CD14-positive monocyte (primary cell): ENCODE measurements at regions of chr6 and their contacts with region 1.

Region 1: GRCh38 chr6:166275714-166276166 is 32.5 kb downstream of the PRR18 start:
- DNase-seq: peak; percentile 55 to 69 (median 69)
- H3K4me3 ChIP-seq: no peak overlapping the region
- H3K4me3 Mint-ChIP-seq: peak overlapping the region in 1 of 2 donors; percentile 64
- H3K27ac ChIP-seq: no peak overlapping the region
- H3K27ac Mint-ChIP-seq: peak overlapping the region in 1 of 7 donors; percentile 41
- H3K4me1 ChIP-seq: peaks cover 0 to 10% of the 10 kb centered on the region in 2 donors
- H3K4me1 Mint-ChIP-seq: peaks cover 9% of the 10 kb centered on the region
- H3K27me3 ChIP-seq: no peaks in the 10 kb centered on the region
- H3K27me3 Mint-ChIP-seq: peaks cover 3 to 7% (median 5%) of the 10 kb centered on the region in 3 donors
- CTCF ChIP-seq: peak; percentile 100

Region 2: GRCh38 chr6:166127624-166128472 is 147.9 kb before region 1 on chr6:
- intact Hi-C with region 1: no loop called
- DNase-seq: no peak
- H3K4me3 ChIP-seq: no peak overlapping the region
- H3K4me3 Mint-ChIP-seq: no peak overlapping the region
- H3K27ac ChIP-seq: no peak overlapping the region
- H3K27ac Mint-ChIP-seq: no peak overlapping the region
- H3K4me1 ChIP-seq: no peaks in the 10 kb centered on the region
- H3K4me1 Mint-ChIP-seq: no peaks in the 10 kb centered on the region
- H3K27me3 ChIP-seq: peaks cover 0 to 5% of the 10 kb centered on the region in 2 donors
- H3K27me3 Mint-ChIP-seq: peaks cover 2 to 11% (median 4%) of the 10 kb centered on the region in 3 donors
- CTCF ChIP-seq: no peak

Region 3: DNA sequence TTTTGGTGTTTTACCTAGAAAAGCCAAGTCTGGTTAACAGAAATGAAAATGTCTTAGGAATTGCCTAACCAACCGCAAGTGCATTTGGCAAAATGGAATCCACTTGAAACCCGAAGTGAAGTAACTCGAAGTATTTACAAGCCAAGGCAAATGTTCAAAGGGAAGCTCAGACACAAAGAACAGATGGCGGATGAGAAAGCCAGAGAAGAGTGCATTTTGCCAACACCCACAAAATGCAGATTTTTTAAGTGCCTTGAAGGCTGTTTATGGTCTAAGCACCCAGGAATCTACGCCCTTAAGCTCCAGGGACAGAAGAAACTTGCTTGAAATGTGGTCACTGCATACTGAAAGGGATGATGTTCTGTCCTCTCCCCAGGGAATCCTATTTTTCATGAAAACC is 38.1 kb before region 1 on chr6:
- intact Hi-C with region 1: loop called in 1 of 2 experiments (anchors 2 kb)
- DNase-seq: no peak
- H3K4me3 ChIP-seq: no peak overlapping the region
- H3K4me3 Mint-ChIP-seq: no peak overlapping the region
- H3K27ac ChIP-seq: peak overlapping the region in 1 of 2 donors; percentile 77
- H3K27ac Mint-ChIP-seq: peak overlapping the region in 6 of 7 donors; percentile 17 to 94 (median 85)
- H3K4me1 ChIP-seq: peaks cover 25 to 27% of the 10 kb centered on the region in 2 donors
- H3K4me1 Mint-ChIP-seq: peaks cover 33% of the 10 kb centered on the region
- H3K27me3 ChIP-seq: no peaks in the 10 kb centered on the region
- H3K27me3 Mint-ChIP-seq: peaks cover 2 to 7% (median 5%) of the 10 kb centered on the region in 3 donors
- CTCF ChIP-seq: no peak